ENCODE measurements at regions of chr15 and their contacts with region 1.

Region 1: GRCh38 chr15:89429023-89429422 is 67.4 kb downstream of the RHCG start:
- DNase-seq: peak in 1 of 5 donors; percentile 46
- H3K4me3 ChIP-seq: no peak overlapping the region
- H3K27ac ChIP-seq: no peak overlapping the region
- H3K4me1 ChIP-seq: no peaks in the 10 kb centered on the region
- H3K27me3 ChIP-seq: peaks cover 6% of the 10 kb centered on the region
- CTCF ChIP-seq: no peak

Region 2: GRCh38 chr15:89171136-89172072 is 257.6 kb before region 1 on chr15:
- intact Hi-C with region 1: no loop called
- DNase-seq: peak in 4 of 5 donors; percentile 42 to 66 (median 59)
- H3K4me3 ChIP-seq: no peak overlapping the region
- H3K27ac ChIP-seq: no peak overlapping the region
- H3K4me1 ChIP-seq: peaks cover 0 to 5% (median 3%) of the 10 kb centered on the region in 3 donors
- H3K27me3 ChIP-seq: no peaks in the 10 kb centered on the region
- CTCF ChIP-seq: peak; percentile 68

Region 3: GRCh38 chr15:89361451-89362202 is 67.4 kb before region 1 on chr15:
- intact Hi-C with region 1: loop called (anchors 10 kb)
- DNase-seq: peak; percentile 84 to 90 (median 89)
- H3K4me3 ChIP-seq: no peak overlapping the region
- H3K27ac ChIP-seq: no peak overlapping the region
- H3K4me1 ChIP-seq: peaks cover 0 to 2% (median 0%) of the 10 kb centered on the region in 3 donors
- H3K27me3 ChIP-seq: peaks cover 67% of the 10 kb centered on the region
- CTCF ChIP-seq: no peak

Region 4: GRCh38 chr15:89704411-89704810 is 275.4 kb after region 1 on chr15:
- intact Hi-C with region 1: no loop called
- DNase-seq: no peak
- H3K4me3 ChIP-seq: no peak overlapping the region
- H3K27ac ChIP-seq: no peak overlapping the region
- H3K4me1 ChIP-seq: no peaks in the 10 kb centered on the region
- H3K27me3 ChIP-seq: no peaks in the 10 kb centered on the region
- CTCF ChIP-seq: no peak

Measured in kidney (tissue), 22 donors.